Activated CD4-positive, alpha-beta memory T cell treated with anti-CD3 and anti-CD28 coated beads, Interleukin-2, amount 10 ng/mL, durations not matched to agents 7 days and 5 days (primary cell): ENCODE measurements at regions of chr6 and their contacts with region 1.

Region 1: DNA sequence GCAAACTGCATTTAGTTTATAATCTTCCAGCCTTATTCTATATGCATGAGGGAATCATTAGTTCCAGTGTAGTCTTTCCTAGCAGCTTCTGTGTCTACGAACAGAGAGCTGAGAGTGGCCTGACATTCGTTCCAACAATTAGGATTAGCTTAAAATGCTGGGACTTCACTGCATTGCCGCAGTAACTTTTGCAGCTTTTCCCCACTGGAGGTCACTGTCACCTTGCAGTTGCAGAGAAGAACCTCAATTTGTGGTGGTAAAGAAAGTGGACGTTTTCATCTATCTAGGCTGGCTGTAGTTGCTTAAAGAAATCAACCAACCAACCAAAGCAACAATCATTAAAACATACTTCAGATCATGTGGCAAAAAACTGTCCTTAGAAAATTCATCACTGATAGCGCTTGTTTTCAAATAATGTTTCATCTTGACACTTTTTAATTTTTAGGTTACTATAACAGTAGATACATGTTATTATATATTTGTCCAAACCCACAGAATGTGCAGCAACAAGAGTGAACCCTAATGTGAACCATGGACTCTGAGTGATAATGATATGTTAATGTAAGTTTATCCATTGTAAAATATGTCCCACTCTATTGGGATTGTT is 12.2 kb downstream of the MYLK4 start:
- DNase-seq: peak; percentile 53
- H3K4me3 Mint-ChIP-seq: no peak overlapping the region
- H3K27ac Mint-ChIP-seq: no peak overlapping the region
- H3K4me1 Mint-ChIP-seq: no peaks in the 10 kb centered on the region
- H3K27me3 Mint-ChIP-seq: peaks cover 5% of the 10 kb centered on the region

Region 2: GRCh38 chr6:2680264-2680922 is 58.1 kb before region 1 on chr6:
- CTCF ChIA-PET with region 1: no interaction called
- POLR2A ChIA-PET with region 1: no interaction called
- DNase-seq: no peak
- H3K4me3 Mint-ChIP-seq: no peak overlapping the region
- H3K27ac Mint-ChIP-seq: no peak overlapping the region
- H3K4me1 Mint-ChIP-seq: no peaks in the 10 kb centered on the region
- H3K27me3 Mint-ChIP-seq: no peaks in the 10 kb centered on the region

Region 3: DNA sequence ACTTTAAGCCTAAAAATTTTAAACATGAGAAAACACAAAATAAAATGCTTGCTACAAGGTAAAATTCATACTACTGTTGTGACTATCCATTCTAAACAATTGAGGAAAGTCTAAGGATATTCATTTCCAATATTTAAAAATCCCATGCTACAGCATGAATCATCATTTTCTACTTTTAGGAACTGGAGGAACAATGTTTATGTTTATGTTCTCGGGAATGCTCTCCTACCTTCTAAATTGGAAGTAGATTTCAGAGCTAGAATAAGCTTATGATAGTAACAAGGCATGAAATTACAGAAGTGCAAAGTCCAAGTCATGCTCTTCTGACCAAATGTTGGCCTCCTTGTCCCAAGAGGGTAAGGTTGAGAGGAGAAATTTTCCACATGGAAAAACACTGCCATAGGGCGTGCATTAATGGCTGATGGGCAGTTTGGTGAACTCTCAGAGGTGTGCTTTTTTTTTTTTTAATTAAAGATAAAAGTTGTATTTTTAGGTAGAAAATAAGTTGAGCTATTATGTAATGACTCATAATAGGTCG is 18.3 kb after region 1 on chr6:
- CTCF ChIA-PET with region 1: interaction called, 86 read pairs
- POLR2A ChIA-PET with region 1: no interaction called
- DNase-seq: no peak
- H3K4me3 Mint-ChIP-seq: no peak overlapping the region
- H3K27ac Mint-ChIP-seq: no peak overlapping the region
- H3K4me1 Mint-ChIP-seq: peaks cover 15% of the 10 kb centered on the region
- H3K27me3 Mint-ChIP-seq: peaks cover 39% of the 10 kb centered on the region

Region 4: GRCh38 chr6:2976571-2977085 is 238.2 kb after region 1 on chr6:
- CTCF ChIA-PET with region 1: no interaction called
- POLR2A ChIA-PET with region 1: no interaction called
- DNase-seq: no peak
- H3K4me3 Mint-ChIP-seq: no peak overlapping the region
- H3K27ac Mint-ChIP-seq: peak overlapping the region; percentile 33
- H3K4me1 Mint-ChIP-seq: peaks cover 20% of the 10 kb centered on the region
- H3K27me3 Mint-ChIP-seq: peaks cover 35% of the 10 kb centered on the region